K562 (cell line): ENCODE measurements at regions of chr17 and their contacts with region 1.

Region 1: DNA sequence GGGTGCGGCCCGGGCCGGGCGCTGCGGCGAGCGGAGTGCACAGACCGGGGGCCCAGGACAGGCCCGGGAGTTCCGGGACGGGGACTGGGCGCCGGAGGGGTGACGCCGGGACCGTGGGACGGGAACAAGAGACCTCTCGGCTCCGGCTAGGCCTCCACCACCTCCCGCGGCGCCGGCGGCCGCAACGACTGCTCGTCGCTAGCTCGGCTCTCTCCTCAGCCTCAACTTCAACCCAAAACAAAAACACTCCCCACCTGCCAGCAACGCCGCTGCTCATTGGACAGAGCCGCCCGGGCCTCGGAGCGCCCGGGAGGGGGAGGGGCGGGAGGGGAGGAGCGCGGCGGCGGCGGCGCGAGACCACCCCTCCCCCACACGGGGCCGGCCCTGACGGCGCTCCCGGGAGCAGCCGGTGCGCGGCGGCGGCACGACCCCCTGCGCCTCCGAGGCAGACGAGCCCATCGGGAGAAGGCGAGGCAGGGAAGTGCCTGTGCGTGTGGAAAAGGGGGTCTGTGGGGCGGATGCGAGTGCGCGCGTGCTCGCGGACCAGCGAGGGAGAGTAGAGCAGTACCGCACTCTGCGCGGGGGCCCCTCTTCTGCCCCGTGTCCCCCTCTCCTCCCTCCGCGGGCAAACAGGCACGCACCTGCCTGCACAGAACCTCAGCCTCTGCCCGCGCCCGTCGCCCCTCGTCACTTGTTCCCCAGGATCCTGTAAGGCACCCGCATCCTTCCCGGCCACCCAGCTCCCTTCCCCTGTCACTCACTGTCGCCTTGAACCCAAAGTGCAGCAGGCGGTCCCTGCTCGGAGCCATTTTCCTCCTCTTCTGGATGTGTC is at the start of gene FBXL20:
- DNase-seq: peak; percentile 95 to 99 (median 99)
- ATAC-seq: peak; percentile 81
- H3K4me3 ChIP-seq: peak within 1 kb of the TSS; percentile 96
- H3K27ac ChIP-seq: peak within 1 kb of the TSS; percentile 86
- H3K4me1 ChIP-seq: peaks cover 9 to 16% of the 10 kb centered on the region in 2 experiments; a peak in 3 of 5 replicates
- H3K27me3 ChIP-seq: no peaks in the 10 kb centered on the region
- CTCF ChIP-seq: no peak
- EP300 ChIP-seq: no peak
- POLR2A ChIP-seq: peak; percentile 78
- RAD21 ChIP-seq: no peak
- polyA plus RNA-seq, gene FBXL20: 1.8 to 3.0 TPM

Region 2: GRCh38 chr17:38704645-38705522 is 696.7 kb before region 1 on chr17 and contains the start of gene MLLT6:
- CTCF ChIA-PET with region 1: no interaction called
- POLR2A ChIA-PET with region 1: no interaction called
- in situ Hi-C with region 1: no loop called
- intact Hi-C with region 1: no loop called
- DNase-seq: peak; percentile 78 to 83 (median 80)
- ATAC-seq: peak; percentile 31
- H3K4me3 ChIP-seq: peak within 1 kb of the TSS; percentile 86
- H3K27ac ChIP-seq: peak within 1 kb of the TSS; percentile 96
- H3K4me1 ChIP-seq: peaks cover 29 to 79% of the 10 kb centered on the region in 2 experiments
- H3K27me3 ChIP-seq: no peaks in the 10 kb centered on the region
- CTCF ChIP-seq: no peak
- EP300 ChIP-seq: no peak
- POLR2A ChIP-seq: no peak
- RAD21 ChIP-seq: no peak
- polyA plus RNA-seq, gene MLLT6: 3.1 to 3.4 TPM

Region 3: GRCh38 chr17:39357986-39358385 is 43.6 kb before region 1 on chr17:
- CTCF ChIA-PET with region 1: no interaction called
- POLR2A ChIA-PET with region 1: interaction called, 3 read pairs
- in situ Hi-C with region 1: no loop called
- intact Hi-C with region 1: loop called (anchors 5 kb)
- DNase-seq: no peak
- ATAC-seq: peak; percentile 41
- H3K4me3 ChIP-seq: no peak overlapping the region
- H3K27ac ChIP-seq: peak overlapping the region; percentile 32; the same call in 1 of the 3 replicates
- H3K4me1 ChIP-seq: peaks cover 13 to 34% of the 10 kb centered on the region in 2 experiments; a peak in 4 of 5 replicates
- H3K27me3 ChIP-seq: no peaks in the 10 kb centered on the region
- CTCF ChIP-seq: no peak
- EP300 ChIP-seq: no peak
- POLR2A ChIP-seq: no peak
- RAD21 ChIP-seq: no peak

Region 4: GRCh38 chr17:39376434-39376833 is 25.2 kb before region 1 on chr17:
- CTCF ChIA-PET with region 1: no interaction called
- POLR2A ChIA-PET with region 1: interaction called, 12 read pairs
- in situ Hi-C with region 1: no loop called
- intact Hi-C with region 1: no loop called
- DNase-seq: no peak
- ATAC-seq: peak; percentile 53
- H3K4me3 ChIP-seq: no peak overlapping the region
- H3K27ac ChIP-seq: peak overlapping the region; percentile 73
- H3K4me1 ChIP-seq: peaks cover 5 to 13% of the 10 kb centered on the region in 2 experiments; a peak in 4 of 5 replicates
- H3K27me3 ChIP-seq: no peaks in the 10 kb centered on the region
- CTCF ChIP-seq: no peak
- EP300 ChIP-seq: no peak
- POLR2A ChIP-seq: no peak
- RAD21 ChIP-seq: no peak

Region 5: GRCh38 chr17:39385040-39385439 is 16.6 kb before region 1 on chr17:
- CTCF ChIA-PET with region 1: interaction called, 3 read pairs
- POLR2A ChIA-PET with region 1: interaction called, 14 read pairs
- in situ Hi-C with region 1: no loop called
- intact Hi-C with region 1: no loop called
- DNase-seq: no peak
- ATAC-seq: no peak
- H3K4me3 ChIP-seq: no peak overlapping the region
- H3K27ac ChIP-seq: no peak overlapping the region; the same call in 2 of the 3 replicates
- H3K4me1 ChIP-seq: no peaks in the 10 kb centered on the region; a peak in 2 of 5 replicates
- H3K27me3 ChIP-seq: no peaks in the 10 kb centered on the region
- CTCF ChIP-seq: no peak
- EP300 ChIP-seq: no peak
- POLR2A ChIP-seq: no peak
- RAD21 ChIP-seq: no peak

Region 6: DNA sequence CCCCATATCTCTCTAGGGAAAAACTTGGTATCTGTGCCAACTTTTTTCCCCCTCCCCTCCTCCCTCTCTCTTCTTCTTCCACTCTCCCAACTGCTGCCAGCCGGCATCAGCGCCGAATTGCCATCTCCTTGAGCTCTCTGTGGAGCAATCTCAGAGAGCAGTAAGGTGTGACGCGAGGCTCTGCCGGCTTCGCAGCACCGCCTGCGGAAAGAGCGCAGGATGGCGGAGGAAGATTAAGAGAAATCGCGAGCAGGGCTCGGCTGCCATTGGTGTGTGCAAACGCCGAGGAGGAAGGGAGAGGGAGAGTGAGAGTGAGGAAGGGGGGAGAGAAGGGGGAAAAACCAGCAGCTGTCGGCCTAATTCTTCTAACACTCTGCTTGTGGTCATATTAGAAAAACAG is 161.8 kb after region 1 on chr17:
- CTCF ChIA-PET with region 1: no interaction called
- POLR2A ChIA-PET with region 1: no interaction called
- in situ Hi-C with region 1: no loop called
- intact Hi-C with region 1: no loop called
- DNase-seq: no peak
- ATAC-seq: no peak
- H3K4me3 ChIP-seq: no peak overlapping the region
- H3K27ac ChIP-seq: no peak overlapping the region
- H3K4me1 ChIP-seq: no peaks in the 10 kb centered on the region
- H3K27me3 ChIP-seq: no peaks in the 10 kb centered on the region
- CTCF ChIP-seq: no peak
- EP300 ChIP-seq: no peak
- POLR2A ChIP-seq: no peak
- RAD21 ChIP-seq: no peak